Dendritic cell treated with granulocyte-macrophage colony-stimulating factor and Interleukin-4, amounts not matched to agents 40 ng/mL and 50 ng/mL, for 4 days (primary cell): ENCODE measurements at regions of chr5 and their contacts with region 1.

Region 1: GRCh38 chr5:97131139-97131710 is 11.2 kb downstream of the LIX1 start:
- H3K4me3 Mint-ChIP-seq: no peak overlapping the region
- H3K27ac Mint-ChIP-seq: no peak overlapping the region
- H3K4me1 Mint-ChIP-seq: peaks cover 18% of the 10 kb centered on the region
- H3K27me3 Mint-ChIP-seq: no peaks in the 10 kb centered on the region

Region 2: GRCh38 chr5:97044052-97044451 is 87.2 kb before region 1 on chr5:
- intact Hi-C with region 1: loop called (anchors 10 kb)
- H3K4me3 Mint-ChIP-seq: no peak overlapping the region
- H3K27ac Mint-ChIP-seq: no peak overlapping the region
- H3K4me1 Mint-ChIP-seq: no peaks in the 10 kb centered on the region
- H3K27me3 Mint-ChIP-seq: peaks cover 4% of the 10 kb centered on the region

Region 3: DNA sequence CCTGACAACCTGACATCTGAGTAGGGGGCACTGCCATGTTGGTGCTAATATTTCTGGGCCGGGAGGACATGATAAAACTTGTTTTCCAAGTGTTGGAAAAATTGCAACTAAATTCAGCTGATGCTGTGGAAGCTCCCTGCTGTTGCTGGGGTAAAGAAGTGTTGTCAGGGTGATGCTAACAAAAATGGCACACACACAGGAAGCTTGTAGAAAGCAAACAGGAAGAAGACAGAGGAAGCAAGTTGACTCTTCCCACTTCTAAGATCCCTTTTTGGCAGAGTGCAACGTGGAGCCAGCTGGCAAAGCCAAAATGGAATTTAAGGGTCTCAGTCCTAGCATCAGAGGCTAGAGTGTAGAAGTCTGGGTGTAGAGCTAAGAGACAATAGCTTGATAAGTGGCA is 63.1 kb after region 1 on chr5:
- intact Hi-C with region 1: no loop called
- H3K4me3 Mint-ChIP-seq: no peak overlapping the region
- H3K27ac Mint-ChIP-seq: no peak overlapping the region
- H3K4me1 Mint-ChIP-seq: peaks cover 6% of the 10 kb centered on the region
- H3K27me3 Mint-ChIP-seq: peaks cover 1% of the 10 kb centered on the region